Activated CD8-positive, alpha-beta T cell treated with anti-CD3 and anti-CD28 coated beads for 36 hours (primary cell): ENCODE measurements at regions of chr9 and their contacts with region 1.

Region 1: DNA sequence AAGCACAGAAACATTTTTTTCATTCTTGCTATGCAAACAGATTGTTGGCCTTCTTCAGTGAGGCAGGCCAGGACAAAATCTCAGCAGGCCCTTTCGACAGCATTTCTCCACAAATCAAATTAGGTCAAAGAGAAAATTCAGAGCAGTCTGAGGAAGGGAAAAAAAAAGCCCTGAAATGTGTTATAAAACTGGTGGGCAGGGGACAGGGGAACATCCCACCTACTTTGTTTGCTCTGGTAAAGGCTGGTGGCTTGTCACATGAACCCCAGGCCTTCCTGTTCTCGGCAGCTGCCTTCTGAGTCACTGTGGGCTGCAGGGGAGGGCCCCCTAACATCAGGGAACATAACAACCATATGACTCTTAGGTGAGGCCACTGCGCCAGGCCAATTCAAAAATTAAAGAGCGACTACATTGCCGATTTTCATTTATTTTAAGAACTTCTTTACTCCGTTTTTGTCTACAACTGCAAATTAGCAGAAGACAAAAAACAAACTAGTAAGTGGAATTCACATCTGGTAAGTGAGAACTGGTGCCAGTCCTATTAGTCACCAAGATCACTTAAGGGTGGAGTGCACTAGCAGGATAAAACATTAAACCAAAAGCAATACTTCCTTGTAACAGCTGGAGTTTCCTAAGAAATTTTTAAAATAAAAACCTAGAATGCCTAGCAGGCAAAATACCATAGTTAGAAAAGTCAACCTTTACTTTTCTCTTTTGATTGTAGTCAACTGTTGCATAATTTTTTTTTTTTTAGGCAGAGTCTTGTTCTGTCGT is 46.2 kb upstream of the DENND4C start:
- DNase-seq: peak; percentile 95
- ATAC-seq: peak; percentile 99
- H3K4me3 Mint-ChIP-seq: peak overlapping the region; percentile 69
- H3K27ac Mint-ChIP-seq: peak overlapping the region; percentile 94
- H3K4me1 Mint-ChIP-seq: peaks cover 31% of the 10 kb centered on the region
- H3K27me3 Mint-ChIP-seq: no peaks in the 10 kb centered on the region
- CTCF ChIP-seq: no peak

Region 2: GRCh38 chr9:19161257-19162025 is 22.9 kb before region 1 on chr9:
- CTCF ChIA-PET with region 1: no interaction called
- POLR2A ChIA-PET with region 1: interaction called, 5 read pairs
- intact Hi-C with region 1: loop called (anchors 2 kb)
- DNase-seq: peak; percentile 82
- ATAC-seq: peak; percentile 97
- H3K4me3 Mint-ChIP-seq: peak overlapping the region; percentile 41
- H3K27ac Mint-ChIP-seq: peak overlapping the region; percentile 91
- H3K4me1 Mint-ChIP-seq: peaks cover 24% of the 10 kb centered on the region
- H3K27me3 Mint-ChIP-seq: no peaks in the 10 kb centered on the region
- CTCF ChIP-seq: no peak

Region 3: GRCh38 chr9:19216466-19216865 is 32.1 kb after region 1 on chr9:
- CTCF ChIA-PET with region 1: no interaction called
- POLR2A ChIA-PET with region 1: no interaction called
- intact Hi-C with region 1: no loop called
- DNase-seq: no peak
- ATAC-seq: no peak
- H3K4me3 Mint-ChIP-seq: no peak overlapping the region
- H3K27ac Mint-ChIP-seq: no peak overlapping the region
- H3K4me1 Mint-ChIP-seq: no peaks in the 10 kb centered on the region
- H3K27me3 Mint-ChIP-seq: no peaks in the 10 kb centered on the region
- CTCF ChIP-seq: no peak

Region 4: DNA sequence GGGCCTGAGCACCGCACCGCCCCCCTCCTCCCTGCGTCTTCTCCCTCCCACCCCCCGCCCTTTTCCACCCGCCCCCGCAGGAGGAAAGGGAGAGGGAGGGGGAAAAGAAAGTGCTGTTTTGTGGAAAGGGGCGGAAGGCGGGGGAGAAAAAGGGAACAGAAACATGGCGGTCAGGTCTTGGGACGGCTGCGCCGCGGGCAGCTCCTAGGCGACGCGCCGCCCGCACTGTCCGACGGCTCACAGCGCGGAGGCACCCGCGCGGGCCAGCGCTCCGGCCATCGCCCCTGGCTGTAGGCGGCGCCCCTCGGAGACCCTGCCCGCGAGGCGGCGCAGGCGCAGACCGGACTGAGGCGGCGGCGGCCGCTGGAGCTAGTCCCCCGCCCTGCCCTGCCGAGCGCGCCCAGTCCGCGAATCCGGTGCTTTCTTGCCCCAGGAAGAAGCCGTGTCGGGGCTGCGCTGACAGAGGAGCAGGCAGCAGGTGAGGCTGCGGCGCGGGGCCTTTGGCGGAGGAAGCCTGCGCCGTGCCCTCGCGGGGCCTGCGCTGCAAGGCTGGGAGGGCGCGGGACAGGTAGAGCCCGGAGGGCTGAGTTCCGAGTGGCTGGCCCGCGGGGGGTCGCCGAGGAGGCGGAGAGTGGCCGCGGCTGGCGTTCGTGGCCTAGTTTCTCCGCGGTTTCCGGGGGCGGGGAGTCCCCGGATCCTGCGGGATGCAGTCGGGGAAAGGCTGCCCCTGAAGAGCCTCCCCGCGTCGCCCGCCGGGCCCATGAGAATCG is 46.2 kb after region 1 on chr9 and contains the start of gene DENND4C:
- CTCF ChIA-PET with region 1: interaction called, 3 read pairs
- POLR2A ChIA-PET with region 1: interaction called, 8 read pairs
- intact Hi-C with region 1: loop called (anchors 5 kb)
- DNase-seq: peak; percentile 86
- ATAC-seq: peak; percentile 86
- H3K4me3 Mint-ChIP-seq: no peak within 1 kb of the TSS
- H3K27ac Mint-ChIP-seq: peak within 1 kb of the TSS; percentile 71
- H3K4me1 Mint-ChIP-seq: peaks cover 17% of the 10 kb centered on the region
- H3K27me3 Mint-ChIP-seq: no peaks in the 10 kb centered on the region
- CTCF ChIP-seq: peak; percentile 16
- total RNA-seq, gene DENND4C: 17.4 to 18.5 TPM